ENCODE measurements at regions of chr21 and their contacts with region 1.

Region 1: GRCh38 chr21:42156690-42157577 is 62.0 kb upstream of the ABCG1 start:
- DNase-seq: peak; percentile 39 to 98 (median 94)
- H3K4me3 ChIP-seq: peak overlapping the region in 9 of 59 donors; percentile 3 to 23 (median 12)
- H3K27ac ChIP-seq: peak overlapping the region; percentile 83 to 99 (median 96)
- H3K27me3 ChIP-seq: peaks cover 0 to 8% (median 0%) of the 10 kb centered on the region in 45 donors
- CTCF ChIP-seq: peak in 17 of 56 donors; percentile 3 to 42 (median 14)

Region 2: DNA sequence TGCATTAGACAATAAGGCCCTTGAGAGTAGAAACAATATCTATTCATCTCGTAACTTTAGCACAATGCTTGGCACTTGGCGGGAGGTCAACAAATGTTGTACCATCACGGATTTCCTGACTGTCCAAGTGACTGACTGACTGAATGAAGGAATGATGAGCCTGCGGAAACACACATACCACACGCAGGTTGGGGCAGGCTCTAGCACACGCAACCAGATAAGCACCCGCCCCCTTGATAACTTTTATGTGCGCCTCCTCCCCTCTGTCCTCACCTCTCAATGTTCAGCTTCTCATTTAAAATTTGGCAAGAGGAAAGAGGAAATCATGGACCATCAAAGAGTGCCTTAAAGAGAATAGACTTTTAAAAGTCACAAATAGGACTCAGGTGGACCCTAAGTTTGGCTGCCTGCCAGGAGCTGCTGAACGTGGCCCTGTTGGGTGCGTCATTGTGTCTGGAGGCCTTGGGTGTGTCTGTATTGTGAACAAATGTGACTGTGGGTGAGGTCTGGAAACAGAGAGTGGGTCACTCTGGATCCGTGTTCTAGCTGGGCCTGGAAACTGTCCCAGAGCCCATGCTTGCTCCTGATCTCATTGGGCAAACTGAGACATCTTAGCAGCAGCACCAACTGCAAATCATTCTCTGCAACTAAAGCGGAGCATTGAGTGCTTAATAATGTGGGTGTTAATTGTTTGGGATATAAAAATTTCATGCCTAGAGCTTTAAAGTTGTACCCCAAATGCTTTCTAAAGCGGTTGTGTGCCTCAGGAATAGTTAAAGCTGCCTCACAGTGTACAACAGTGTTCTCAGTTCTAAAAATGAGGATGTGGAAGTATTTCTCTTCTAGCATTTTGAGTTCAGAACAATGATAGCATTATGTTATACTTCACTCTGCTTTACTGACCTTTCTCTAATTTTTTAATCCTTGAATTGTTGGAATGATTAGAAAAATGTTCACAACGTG is 14.4 kb after region 1 on chr21:
- intact Hi-C with region 1: loop called in 1 of 2 experiments (anchors 2 kb)
- DNase-seq: peak in 6 of 10 donors; percentile 61 to 93 (median 76)
- H3K4me3 ChIP-seq: peak overlapping the region in 9 of 59 donors; percentile 2 to 37 (median 15)
- H3K27ac ChIP-seq: peak overlapping the region; percentile 7 to 98 (median 91)
- H3K27me3 ChIP-seq: no peaks in the 10 kb centered on the region
- CTCF ChIP-seq: peak in 3 of 56 donors; percentile 4 to 11 (median 7)

Region 3: GRCh38 chr21:42258153-42258884 is 101.4 kb after region 1 on chr21:
- intact Hi-C with region 1: loop called (anchors 5 kb)
- DNase-seq: peak; percentile 52 to 87 (median 83)
- H3K4me3 ChIP-seq: peak overlapping the region in 1 of 59 donors; percentile 18
- H3K27ac ChIP-seq: peak overlapping the region in 50 of 59 donors; percentile 1 to 91 (median 68)
- H3K27me3 ChIP-seq: no peaks in the 10 kb centered on the region
- CTCF ChIP-seq: peak; percentile 43 to 94 (median 87)

Region 4: GRCh38 chr21:42537106-42537742 is 380.3 kb after region 1 on chr21:
- intact Hi-C with region 1: loop called in 1 of 2 experiments (anchors 10 kb)
- DNase-seq: peak in 3 of 10 donors; percentile 33 to 38 (median 33)
- H3K4me3 ChIP-seq: no peak overlapping the region
- H3K27ac ChIP-seq: peak overlapping the region in 1 of 59 donors; percentile 8
- H3K27me3 ChIP-seq: no peaks in the 10 kb centered on the region
- CTCF ChIP-seq: peak in 53 of 56 donors; percentile 13 to 66 (median 41)

Region 5: GRCh38 chr21:42878993-42879787 is 722.3 kb after region 1 on chr21 and contains the start of gene WDR4:
- intact Hi-C with region 1: loop called in 1 of 2 experiments (anchors 10 kb)
- DNase-seq: peak; percentile 89 to 95 (median 92)
- H3K4me3 ChIP-seq: peak within 1 kb of the TSS; percentile 63 to 100 (median 96)
- H3K27ac ChIP-seq: peak within 1 kb of the TSS in 53 of 59 donors; percentile 43 to 95 (median 81)
- H3K27me3 ChIP-seq: no peaks in the 10 kb centered on the region
- CTCF ChIP-seq: peak in 27 of 56 donors; percentile 5 to 60 (median 24)
- total RNA-seq, gene WDR4: 10.5 to 26.1 (median 16.4) TPM